Right cardiac atrium (tissue), 5 donors: ENCODE measurements at regions of chr2 and their contacts with region 1.

Region 1: DNA sequence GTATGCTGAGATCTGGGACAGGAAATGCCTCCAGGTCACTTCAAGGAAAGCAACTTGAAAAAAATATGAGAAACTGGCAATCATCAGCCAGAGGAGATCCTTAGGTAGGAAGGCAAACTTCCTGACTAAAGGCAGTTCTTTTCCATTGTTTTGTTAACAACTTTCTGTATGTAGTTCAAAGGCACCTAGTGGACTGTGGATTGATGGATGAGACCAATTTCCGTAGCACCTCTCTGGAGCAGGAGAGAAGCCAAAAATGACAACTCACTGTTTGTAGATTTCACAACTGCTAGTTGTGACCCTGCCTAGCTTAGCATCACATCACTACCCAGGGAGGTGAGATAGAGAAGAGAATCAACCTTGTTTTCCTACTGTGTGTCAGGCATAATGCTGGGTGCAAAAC is 21.8 kb upstream of the NOSTRIN start:
- DNase-seq: no peak
- ATAC-seq: peak; percentile 47 to 76
- H3K4me3 ChIP-seq: no peak overlapping the region
- H3K27ac ChIP-seq: no peak overlapping the region
- H3K4me1 ChIP-seq: no peaks in the 10 kb centered on the region
- H3K27me3 ChIP-seq: no peaks in the 10 kb centered on the region

Region 2: GRCh38 chr2:168816369-168816768 is 35.7 kb after region 1 on chr2:
- intact Hi-C with region 1: no loop called
- DNase-seq: no peak
- ATAC-seq: no peak
- H3K4me3 ChIP-seq: no peak overlapping the region
- H3K27ac ChIP-seq: no peak overlapping the region
- H3K4me1 ChIP-seq: peaks cover 10% of the 10 kb centered on the region
- H3K27me3 ChIP-seq: no peaks in the 10 kb centered on the region

Region 3: GRCh38 chr2:168849610-168850009 is 68.9 kb after region 1 on chr2:
- intact Hi-C with region 1: loop called in 1 of 4 experiments (anchors 10 kb)
- DNase-seq: peak; percentile 20 to 66 (median 55)
- ATAC-seq: peak; percentile 73 to 84
- H3K4me3 ChIP-seq: no peak overlapping the region
- H3K27ac ChIP-seq: no peak overlapping the region
- H3K4me1 ChIP-seq: no peaks in the 10 kb centered on the region
- H3K27me3 ChIP-seq: no peaks in the 10 kb centered on the region

Region 4: GRCh38 chr2:168992591-168993349 is 212.1 kb after region 1 on chr2:
- intact Hi-C with region 1: no loop called
- DNase-seq: no peak
- ATAC-seq: peak in 1 of 2 donors; percentile 19
- H3K4me3 ChIP-seq: no peak overlapping the region
- H3K27ac ChIP-seq: no peak overlapping the region
- H3K4me1 ChIP-seq: peaks cover 1% of the 10 kb centered on the region
- H3K27me3 ChIP-seq: no peaks in the 10 kb centered on the region